Activated CD4-positive, alpha-beta T cell treated with anti-CD3 and anti-CD28 coated beads, Interleukin-2, amount 10 ng/mL, durations not matched to agents 24 days and 14 days (primary cell): ENCODE measurements at regions of chr1 and their contacts with region 1.

Region 1: GRCh38 chr1:108746372-108747205 is at the start of gene STXBP3:
- DNase-seq: peak; percentile 100
- H3K4me3 Mint-ChIP-seq: peak within 1 kb of the TSS; percentile 97
- H3K27ac Mint-ChIP-seq: peak within 1 kb of the TSS; percentile 97
- H3K4me1 Mint-ChIP-seq: peaks cover 27% of the 10 kb centered on the region
- H3K27me3 Mint-ChIP-seq: peaks cover 1% of the 10 kb centered on the region
- total RNA-seq, gene STXBP3: 41.1 and 48.9 TPM in 2 replicates

Region 2: GRCh38 chr1:107648071-107648470 is 1098.5 kb before region 1 on chr1:
- intact Hi-C with region 1: no loop called
- DNase-seq: no peak
- H3K4me3 Mint-ChIP-seq: no peak overlapping the region
- H3K27ac Mint-ChIP-seq: no peak overlapping the region
- H3K4me1 Mint-ChIP-seq: no peaks in the 10 kb centered on the region
- H3K27me3 Mint-ChIP-seq: no peaks in the 10 kb centered on the region

Region 3: GRCh38 chr1:108559215-108560186 is 187.1 kb before region 1 on chr1 and contains the start of gene EEIG2:
- intact Hi-C with region 1: loop called (anchors 1 kb)
- DNase-seq: peak; percentile 97
- H3K4me3 Mint-ChIP-seq: peak within 1 kb of the TSS; percentile 93
- H3K27ac Mint-ChIP-seq: peak within 1 kb of the TSS; percentile 90
- H3K4me1 Mint-ChIP-seq: peaks cover 30% of the 10 kb centered on the region
- H3K27me3 Mint-ChIP-seq: peaks cover 8% of the 10 kb centered on the region
- total RNA-seq, gene EEIG2: 13.4 and 14.0 TPM in 2 replicates

Region 4: GRCh38 chr1:108691942-108692723 is 54.5 kb before region 1 on chr1 and contains the start of gene PRPF38B:
- intact Hi-C with region 1: loop called (anchors 1 kb)
- DNase-seq: peak; percentile 98
- H3K4me3 Mint-ChIP-seq: peak within 1 kb of the TSS; percentile 99
- H3K27ac Mint-ChIP-seq: peak within 1 kb of the TSS; percentile 100
- H3K4me1 Mint-ChIP-seq: peaks cover 26% of the 10 kb centered on the region
- H3K27me3 Mint-ChIP-seq: peaks cover 14% of the 10 kb centered on the region
- total RNA-seq, gene PRPF38B: 89.2 and 90.3 TPM in 2 replicates

Region 5: DNA sequence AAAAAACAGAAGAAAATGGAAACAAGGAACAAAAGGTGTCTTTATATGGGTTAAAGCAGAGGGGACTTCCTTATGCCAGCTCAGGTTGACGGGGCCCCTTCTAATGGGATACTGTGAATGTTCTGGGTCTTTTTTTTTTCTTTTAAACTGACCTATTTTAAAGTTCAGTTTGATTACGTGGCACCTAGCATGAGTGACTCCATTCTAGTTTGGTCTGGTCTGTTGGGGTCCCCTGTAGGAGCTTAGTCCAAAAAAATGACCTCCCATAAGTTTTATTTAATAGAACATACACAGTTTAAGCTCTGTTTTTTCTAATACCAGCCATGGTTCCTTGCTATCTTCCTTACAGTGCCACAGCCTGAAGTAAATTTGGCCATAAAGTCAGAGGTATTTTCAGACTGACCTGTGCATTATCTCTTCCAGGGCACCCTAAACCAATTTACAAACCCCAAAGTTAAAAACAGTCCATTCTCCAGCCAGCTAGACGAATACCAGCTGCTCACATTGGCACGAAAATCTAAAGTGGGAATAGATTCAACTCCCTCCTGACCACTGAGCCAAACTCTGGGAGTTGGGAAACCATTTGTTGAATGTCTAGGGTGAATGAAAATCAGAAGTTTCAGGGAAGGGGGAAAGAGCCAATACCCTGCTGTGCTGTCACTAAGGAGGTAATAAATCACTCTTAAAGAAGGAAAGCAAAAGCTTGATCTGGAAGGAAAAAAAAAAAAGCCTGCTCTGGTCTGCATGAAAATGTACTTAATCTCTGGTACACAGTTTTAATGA is 67.9 kb after region 1 on chr1:
- intact Hi-C with region 1: no loop called
- DNase-seq: peak; percentile 35
- H3K4me3 Mint-ChIP-seq: no peak overlapping the region
- H3K27ac Mint-ChIP-seq: no peak overlapping the region
- H3K4me1 Mint-ChIP-seq: peaks cover 2% of the 10 kb centered on the region
- H3K27me3 Mint-ChIP-seq: peaks cover 20% of the 10 kb centered on the region

Region 6: DNA sequence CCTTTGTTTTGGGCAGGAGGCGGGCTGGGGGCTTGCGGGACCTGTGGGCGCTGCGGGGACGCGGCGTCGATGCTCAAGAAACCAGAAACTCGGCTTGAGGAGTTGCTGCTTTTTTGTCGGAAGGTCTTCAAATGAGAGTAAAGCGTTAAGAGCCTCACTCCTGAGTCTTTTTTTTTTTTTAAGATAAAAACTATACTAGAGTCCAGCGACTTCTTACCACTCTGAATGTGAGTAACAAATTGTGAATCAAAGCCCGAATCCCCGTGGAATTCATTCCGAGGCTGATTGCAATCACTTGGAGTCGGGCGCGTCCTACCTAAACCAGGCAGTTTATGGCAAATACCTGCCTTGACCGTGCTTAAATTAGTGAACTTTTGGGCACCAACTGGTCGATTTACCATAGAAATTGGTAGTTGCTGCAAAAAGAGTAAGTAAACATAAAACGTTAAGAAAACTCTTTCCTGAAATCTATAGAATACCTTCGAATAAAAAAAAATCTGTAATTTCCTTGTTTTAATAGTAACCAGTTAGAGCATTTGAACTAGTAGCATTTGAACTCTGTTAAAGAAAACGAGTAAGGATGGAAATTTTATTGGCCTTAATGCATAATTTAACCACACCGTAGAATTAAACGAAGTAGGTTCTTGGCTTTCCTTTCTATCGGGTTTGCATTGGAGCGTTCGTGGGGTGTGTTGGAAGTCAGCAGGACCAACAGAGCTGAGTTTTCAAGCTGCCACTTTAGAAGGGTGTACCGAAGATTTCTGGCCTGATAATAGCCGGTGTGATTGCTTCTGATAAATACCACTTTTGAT is 131.0 kb after region 1 on chr1:
- intact Hi-C with region 1: loop called (anchors 2 kb)
- DNase-seq: peak; percentile 65
- H3K4me3 Mint-ChIP-seq: peak overlapping the region; percentile 93
- H3K27ac Mint-ChIP-seq: peak overlapping the region; percentile 54
- H3K4me1 Mint-ChIP-seq: peaks cover 23% of the 10 kb centered on the region
- H3K27me3 Mint-ChIP-seq: peaks cover 17% of the 10 kb centered on the region

Region 7: DNA sequence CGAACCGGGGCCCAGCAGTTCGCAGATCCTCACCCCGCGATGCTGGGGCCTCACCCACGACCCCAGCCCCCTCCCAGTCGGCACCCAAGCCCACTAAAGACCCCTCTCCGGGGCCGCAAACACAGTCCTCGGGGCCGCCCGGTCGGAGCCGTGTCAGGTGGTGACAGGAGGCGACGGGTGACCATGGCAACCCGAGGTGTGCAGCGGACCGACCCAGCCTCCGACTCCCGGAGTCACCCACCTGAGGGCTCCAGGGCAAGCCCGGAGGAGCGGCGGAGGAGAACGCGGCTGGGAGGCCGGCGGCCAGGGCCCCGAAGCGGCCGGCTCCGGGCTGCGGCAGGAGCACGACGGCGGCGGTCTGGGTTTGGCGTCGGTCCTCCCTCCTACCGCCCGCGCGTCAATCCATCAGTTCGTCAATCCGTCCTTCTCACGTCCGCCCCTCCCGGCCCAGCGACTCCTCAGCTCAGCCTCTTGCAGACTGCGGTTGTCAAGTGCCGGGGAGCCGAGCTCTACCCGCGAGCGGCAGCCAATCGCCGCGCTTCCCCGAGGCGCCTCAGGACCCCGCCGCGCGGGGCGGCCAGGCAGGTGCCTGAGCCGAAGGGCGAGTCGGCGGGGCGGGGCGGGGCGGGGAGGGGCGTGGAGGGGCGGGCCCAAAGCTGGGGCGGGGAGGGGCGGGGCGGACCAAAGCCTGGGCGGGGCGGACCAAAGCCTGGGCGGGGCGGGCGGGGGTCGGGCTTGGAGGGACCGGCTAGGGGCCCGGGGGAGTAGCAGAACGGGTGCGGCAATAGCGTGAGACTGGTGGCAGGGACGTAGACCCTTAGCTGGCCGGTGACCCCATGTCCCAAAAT is 295.3 kb after region 1 on chr1 and contains the start of gene WDR47:
- intact Hi-C with region 1: loop called (anchors 1 kb)
- DNase-seq: peak; percentile 99
- H3K4me3 Mint-ChIP-seq: peak within 1 kb of the TSS; percentile 92
- H3K27ac Mint-ChIP-seq: peak within 1 kb of the TSS; percentile 85
- H3K4me1 Mint-ChIP-seq: peaks cover 15% of the 10 kb centered on the region
- H3K27me3 Mint-ChIP-seq: peaks cover 11% of the 10 kb centered on the region
- total RNA-seq, gene WDR47: 11.8 and 14.0 TPM in 2 replicates